ENCODE measurements at regions of chr5 and their contacts with region 1.

Region 1: DNA sequence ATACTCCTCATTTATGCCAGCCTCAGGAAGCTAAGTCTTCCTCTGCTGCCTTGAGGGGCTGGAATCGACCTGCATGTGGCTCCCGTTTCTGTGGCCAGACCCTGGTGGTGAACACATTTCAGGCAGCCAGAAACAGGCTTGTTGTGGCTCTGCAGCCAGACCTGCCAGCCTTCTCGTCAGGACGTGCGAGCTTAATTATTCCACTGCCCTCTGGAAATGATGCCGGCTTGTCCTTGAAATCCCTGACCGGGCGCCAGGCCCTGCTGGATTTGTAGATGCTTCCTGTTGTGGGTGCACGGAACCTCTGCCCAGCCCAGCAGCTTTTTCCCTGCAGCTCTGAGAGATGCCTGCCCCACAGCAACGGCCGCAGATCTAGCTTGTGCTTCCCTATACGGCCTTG is 41.6 kb downstream of the PDZD2 start:
- DNase-seq: no peak
- H3K4me3 ChIP-seq: no peak overlapping the region
- H3K27ac ChIP-seq: no peak overlapping the region
- H3K4me1 ChIP-seq: peaks cover 0 to 4% (median 1%) of the 10 kb centered on the region in 4 experiments; a peak in 4 of 7 replicates
- H3K27me3 ChIP-seq: no peaks in the 10 kb centered on the region
- CTCF ChIP-seq: no peak
- EP300 ChIP-seq: no peak
- POLR2A ChIP-seq: no peak
- RAD21 ChIP-seq: no peak

Region 2: DNA sequence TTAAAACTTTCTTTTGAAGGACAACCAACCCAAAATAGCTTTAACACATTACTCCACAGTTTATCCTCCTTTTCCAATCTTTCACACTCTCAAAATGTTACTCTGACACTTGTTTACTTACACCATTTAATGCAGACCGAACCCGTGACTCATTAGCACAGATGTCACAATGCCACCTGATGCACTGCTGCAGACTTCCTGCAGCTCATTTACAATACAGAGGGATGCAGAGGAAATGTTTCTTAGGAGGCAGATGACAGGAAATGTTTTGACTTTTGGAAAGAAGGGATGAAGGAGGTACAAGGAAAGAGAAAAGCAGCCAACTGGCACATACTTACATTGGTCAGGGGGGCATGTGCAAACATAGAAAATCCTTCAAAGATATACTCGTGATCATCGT is 187.7 kb before region 1 on chr5:
- CTCF ChIA-PET with region 1: no interaction called
- POLR2A ChIA-PET with region 1: no interaction called
- DNase-seq: no peak
- H3K4me3 ChIP-seq: no peak overlapping the region
- H3K27ac ChIP-seq: no peak overlapping the region
- H3K4me1 ChIP-seq: peaks cover 0 to 4% (median 0%) of the 10 kb centered on the region in 4 experiments; a peak in 1 of 7 replicates
- H3K27me3 ChIP-seq: no peaks in the 10 kb centered on the region
- CTCF ChIP-seq: no peak
- EP300 ChIP-seq: no peak
- POLR2A ChIP-seq: no peak
- RAD21 ChIP-seq: no peak

Region 3: DNA sequence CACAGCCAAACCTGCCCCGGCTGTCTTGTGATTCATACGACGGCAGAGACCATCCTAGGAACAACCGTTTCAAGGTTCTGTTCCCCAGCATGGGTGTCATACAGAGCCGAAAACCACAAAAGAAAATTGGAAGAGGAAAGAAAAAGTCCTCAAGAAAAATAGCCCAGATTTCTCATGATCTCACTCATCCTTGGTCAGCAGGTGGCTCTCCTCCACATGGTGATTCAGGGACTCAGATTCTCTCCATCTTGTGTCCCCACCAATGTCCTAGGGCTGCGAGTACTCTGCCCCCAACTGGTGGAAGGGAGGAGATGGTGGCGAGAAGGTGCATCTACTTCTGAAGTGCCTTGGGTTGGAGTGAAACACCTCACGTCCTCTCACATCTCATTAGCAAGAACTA is 16.0 kb before region 1 on chr5:
- CTCF ChIA-PET with region 1: interaction called, 24 read pairs
- POLR2A ChIA-PET with region 1: no interaction called
- DNase-seq: peak; percentile 60 to 75
- H3K4me3 ChIP-seq: no peak overlapping the region
- H3K27ac ChIP-seq: no peak overlapping the region
- H3K4me1 ChIP-seq: no peaks in the 10 kb centered on the region
- H3K27me3 ChIP-seq: no peaks in the 10 kb centered on the region
- CTCF ChIP-seq: peak; percentile 87 to 97 (median 94)
- EP300 ChIP-seq: no peak
- POLR2A ChIP-seq: no peak
- RAD21 ChIP-seq: peak; percentile 80 to 85